ENCODE measurements at regions of chr5 and their contacts with region 1.

Region 1: DNA sequence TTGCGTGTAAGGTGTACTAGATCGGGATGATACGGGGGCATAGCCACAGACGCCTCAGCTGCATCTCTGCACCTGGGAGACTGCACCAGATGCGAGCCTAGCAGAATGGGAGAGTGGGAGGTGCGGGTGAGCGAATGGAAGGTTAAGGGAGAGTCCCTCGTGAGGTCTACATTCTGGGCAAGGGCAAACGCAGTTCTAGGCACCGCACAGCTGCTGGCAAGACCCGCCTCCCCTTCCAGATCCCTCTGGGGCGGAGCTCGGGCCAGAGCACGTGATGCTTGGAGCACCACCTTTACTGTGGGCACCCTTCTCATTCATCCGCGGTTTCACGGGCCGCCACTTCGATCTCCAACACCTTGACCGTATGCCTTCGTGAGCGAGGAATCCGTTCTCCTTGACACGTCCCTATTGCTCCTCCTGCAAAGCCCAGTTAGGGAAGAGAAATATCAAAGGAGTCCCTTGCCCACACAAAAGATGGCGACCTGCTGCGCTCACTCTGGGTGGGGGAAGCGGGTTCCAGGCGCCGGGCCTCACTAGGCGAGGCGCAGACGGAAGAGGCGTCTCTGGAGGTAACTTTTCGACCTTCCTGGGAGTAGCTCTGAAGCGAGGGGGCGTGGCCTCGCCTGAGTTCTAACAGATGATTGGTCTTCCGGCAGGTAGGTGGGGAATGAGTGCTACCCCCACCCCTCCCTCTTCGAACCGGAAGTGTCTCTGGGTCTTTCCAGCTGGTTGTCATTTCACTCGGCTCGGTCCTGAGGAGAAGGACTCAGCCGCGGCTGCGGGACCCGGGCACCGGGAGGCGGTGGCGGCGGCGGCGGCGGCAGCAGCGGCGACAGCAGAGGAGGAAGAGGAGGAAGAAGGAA is at the start of gene CPEB4:
- DNase-seq: peak; percentile 98 to 100
- H3K4me3 ChIP-seq: peak within 1 kb of the TSS; percentile 78 to 86
- H3K27ac ChIP-seq: peak within 1 kb of the TSS; percentile 86 to 90
- H3K4me1 ChIP-seq: no peaks in the 10 kb centered on the region
- H3K27me3 ChIP-seq: no peaks in the 10 kb centered on the region
- CTCF ChIP-seq: no peak
- total RNA-seq, gene CPEB4: 37.4 TPM

Region 2: DNA sequence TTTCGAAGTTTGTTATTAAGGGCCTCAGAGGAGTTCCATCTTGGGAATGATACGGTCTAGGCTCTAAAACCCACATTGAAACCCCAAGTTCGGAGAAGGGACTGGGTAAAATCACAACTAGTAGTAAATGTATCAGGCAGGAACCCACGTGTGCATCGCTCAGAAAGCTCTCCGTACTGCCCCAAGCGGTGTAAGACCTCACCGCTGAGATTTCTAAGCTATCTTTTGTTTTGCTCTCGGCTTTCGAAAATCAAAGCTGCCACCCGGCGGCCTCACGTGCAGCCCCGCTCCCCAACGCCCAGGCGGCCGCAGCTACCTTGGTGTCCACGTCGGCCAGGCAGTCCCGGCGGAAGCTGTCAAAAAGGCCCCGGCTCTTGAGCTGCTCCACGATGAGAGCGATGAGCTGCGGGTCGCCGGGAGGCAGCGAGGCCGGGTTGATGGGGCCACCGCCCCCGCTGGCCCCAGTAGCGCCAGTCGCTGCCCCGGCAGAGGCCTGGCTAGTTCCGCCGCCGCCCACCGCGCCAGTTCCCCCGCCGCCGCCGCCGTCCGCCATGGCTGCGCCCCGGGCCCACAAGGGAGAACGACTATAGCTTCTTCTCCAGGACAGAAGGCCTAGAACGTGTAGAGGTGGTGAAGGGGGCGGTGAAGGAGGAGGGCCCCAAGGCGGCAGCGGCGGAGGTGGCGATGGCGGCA is 271.8 kb before region 1 on chr5:
- intact Hi-C with region 1: loop called (anchors 1 kb)
- DNase-seq: peak in 1 of 2 donors; percentile 77
- H3K4me3 ChIP-seq: peak overlapping the region; percentile 70 to 79
- H3K27ac ChIP-seq: peak overlapping the region; percentile 90 to 92
- H3K4me1 ChIP-seq: peaks cover 9 to 17% of the 10 kb centered on the region in 2 donors
- H3K27me3 ChIP-seq: no peaks in the 10 kb centered on the region
- CTCF ChIP-seq: peak; percentile 47 to 72 (median 67)

Region 3: GRCh38 chr5:173781814-173782670 is 105.8 kb before region 1 on chr5:
- intact Hi-C with region 1: loop called (anchors 5 kb)
- DNase-seq: peak; percentile 78 to 94
- H3K4me3 ChIP-seq: no peak overlapping the region
- H3K27ac ChIP-seq: peak overlapping the region; percentile 65 to 72
- H3K4me1 ChIP-seq: peaks cover 4 to 16% of the 10 kb centered on the region in 2 donors
- H3K27me3 ChIP-seq: no peaks in the 10 kb centered on the region
- CTCF ChIP-seq: no peak

Region 4: DNA sequence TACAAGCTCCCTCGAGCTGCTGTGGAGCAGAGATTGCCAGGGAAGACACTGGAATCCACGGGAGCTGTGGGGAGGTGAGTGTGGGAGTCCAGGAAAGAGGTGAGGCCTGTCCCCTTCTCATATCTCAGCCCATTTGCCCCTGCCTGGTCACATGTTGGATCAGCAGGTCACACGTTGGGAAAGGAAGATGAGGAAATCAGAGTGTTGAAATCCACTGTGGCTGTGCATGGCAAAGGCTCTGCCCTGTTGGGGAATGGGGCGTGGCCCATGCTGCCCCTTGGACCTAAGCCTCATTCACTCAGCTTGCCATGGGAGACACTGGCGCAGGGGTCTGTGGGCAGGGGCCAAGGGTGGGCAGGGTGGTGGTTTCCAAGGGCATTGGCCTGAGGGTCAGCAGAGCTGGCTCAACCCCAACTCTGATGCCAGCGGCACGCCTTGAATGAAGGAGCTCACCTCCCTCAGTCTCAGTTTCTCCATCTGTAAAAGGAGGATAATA is 85.1 kb before region 1 on chr5:
- intact Hi-C with region 1: no loop called
- DNase-seq: no peak
- H3K4me3 ChIP-seq: no peak overlapping the region
- H3K27ac ChIP-seq: no peak overlapping the region
- H3K4me1 ChIP-seq: no peaks in the 10 kb centered on the region
- H3K27me3 ChIP-seq: no peaks in the 10 kb centered on the region
- CTCF ChIP-seq: no peak

Region 5: DNA sequence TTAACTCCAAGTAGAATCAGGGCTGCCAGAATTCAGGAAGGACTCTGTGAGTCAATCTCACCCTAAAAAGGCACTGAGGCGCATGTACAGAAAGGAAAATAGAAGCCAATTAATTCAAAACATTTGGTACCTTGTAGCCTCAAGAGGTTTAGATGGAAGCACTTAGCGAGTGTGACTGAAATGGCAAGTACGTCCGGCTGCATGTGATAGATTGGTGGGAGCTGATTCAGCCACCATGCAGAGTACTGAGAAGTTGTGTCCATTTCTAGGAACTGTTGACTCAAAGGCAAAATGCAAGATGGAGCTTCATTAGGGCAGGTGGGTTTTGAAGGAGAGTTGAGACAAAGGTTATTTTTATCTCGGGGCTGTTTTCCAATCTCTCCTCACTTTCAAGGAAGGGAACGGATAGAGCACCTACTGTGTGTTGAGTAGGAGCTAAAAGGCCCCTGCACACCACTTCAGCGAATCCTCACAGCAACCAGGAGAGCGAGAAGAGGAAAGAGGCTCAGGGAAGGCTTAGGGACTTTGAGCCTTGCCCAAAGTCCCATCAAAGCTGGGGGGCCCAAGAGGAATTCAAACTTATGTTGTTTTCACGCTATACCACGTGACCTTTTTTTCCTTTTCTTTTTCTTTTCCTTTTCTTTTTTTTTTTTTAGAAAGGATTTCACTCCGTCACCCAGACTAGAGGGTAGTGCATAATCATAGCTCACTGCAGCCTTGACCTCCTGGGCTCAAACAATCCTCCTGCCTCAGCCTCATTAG is 34.3 kb before region 1 on chr5:
- intact Hi-C with region 1: loop called (anchors 5 kb)
- DNase-seq: no peak
- H3K4me3 ChIP-seq: no peak overlapping the region
- H3K27ac ChIP-seq: peak overlapping the region; percentile 48 to 73
- H3K4me1 ChIP-seq: peaks cover 3 to 8% of the 10 kb centered on the region in 2 donors
- H3K27me3 ChIP-seq: no peaks in the 10 kb centered on the region
- CTCF ChIP-seq: no peak

Region 6: DNA sequence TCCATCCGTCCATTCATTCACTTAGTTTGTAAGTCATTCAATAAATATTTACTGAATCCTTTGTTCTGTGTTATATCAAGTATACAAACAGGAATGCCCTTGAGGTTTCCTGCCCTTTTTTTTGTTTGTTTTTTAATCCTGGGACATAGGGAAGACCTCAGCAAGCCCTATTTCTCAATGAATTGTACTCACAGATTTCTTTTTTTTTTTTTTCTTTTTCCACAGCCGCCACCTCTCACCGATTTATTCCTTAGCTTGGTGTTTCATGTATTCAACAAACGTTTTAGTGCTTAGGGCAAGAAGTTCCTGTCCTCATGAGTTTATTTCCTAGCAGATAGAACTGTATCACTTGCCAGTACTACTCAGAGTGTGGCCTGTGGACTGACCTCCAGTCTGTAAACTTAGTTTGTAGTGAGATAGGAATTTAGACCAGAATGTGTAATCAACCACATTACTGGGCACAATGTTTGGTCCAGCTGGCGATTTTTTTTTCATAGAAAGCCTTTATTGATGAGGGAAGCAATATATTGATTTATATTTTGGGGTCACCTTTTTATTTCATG is 65.8 kb after region 1 on chr5:
- intact Hi-C with region 1: no loop called
- DNase-seq: no peak
- H3K4me3 ChIP-seq: no peak overlapping the region
- H3K27ac ChIP-seq: no peak overlapping the region
- H3K4me1 ChIP-seq: no peaks in the 10 kb centered on the region
- H3K27me3 ChIP-seq: no peaks in the 10 kb centered on the region
- CTCF ChIP-seq: no peak

Region 7: DNA sequence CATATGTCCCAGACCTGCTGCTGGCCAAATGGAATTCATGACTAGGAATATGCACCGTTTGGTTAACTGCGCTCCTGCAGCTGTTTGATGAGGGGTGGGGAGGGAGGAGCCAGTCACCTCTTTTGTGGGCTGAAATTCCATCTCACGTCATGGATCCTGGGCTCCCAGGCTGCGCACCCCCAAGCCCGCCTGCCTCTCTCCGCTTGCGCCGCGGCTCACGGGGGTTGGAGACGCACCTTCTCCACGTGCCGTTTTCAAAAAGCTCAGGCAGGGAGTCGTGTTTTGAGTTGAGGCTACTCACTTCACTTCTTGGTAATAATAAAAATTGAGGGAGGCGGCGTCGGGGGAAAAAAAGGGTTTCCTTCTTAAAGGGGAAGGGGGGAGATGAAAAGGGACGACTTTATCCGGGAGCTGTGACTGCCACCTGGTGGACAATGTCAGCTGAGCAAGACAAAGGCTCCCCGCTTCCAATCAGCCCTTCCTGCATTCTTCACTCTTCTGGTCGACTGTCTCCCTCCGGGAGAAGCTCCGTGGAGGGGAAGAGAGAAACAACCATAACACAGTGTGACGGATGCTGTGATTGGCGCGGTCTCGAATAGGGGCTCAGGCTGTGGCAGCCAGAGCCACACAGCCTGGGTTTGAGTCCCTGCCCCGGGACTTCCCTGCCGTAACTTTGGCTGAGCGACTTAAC is 85.2 kb after region 1 on chr5:
- intact Hi-C with region 1: loop called (anchors 1 kb)
- DNase-seq: peak in 1 of 2 donors; percentile 92
- H3K4me3 ChIP-seq: peak overlapping the region; percentile 65 to 68
- H3K27ac ChIP-seq: no peak overlapping the region
- H3K4me1 ChIP-seq: peaks cover 4 to 10% of the 10 kb centered on the region in 2 donors
- H3K27me3 ChIP-seq: no peaks in the 10 kb centered on the region
- CTCF ChIP-seq: peak; percentile 86 to 90 (median 90)

Region 8: DNA sequence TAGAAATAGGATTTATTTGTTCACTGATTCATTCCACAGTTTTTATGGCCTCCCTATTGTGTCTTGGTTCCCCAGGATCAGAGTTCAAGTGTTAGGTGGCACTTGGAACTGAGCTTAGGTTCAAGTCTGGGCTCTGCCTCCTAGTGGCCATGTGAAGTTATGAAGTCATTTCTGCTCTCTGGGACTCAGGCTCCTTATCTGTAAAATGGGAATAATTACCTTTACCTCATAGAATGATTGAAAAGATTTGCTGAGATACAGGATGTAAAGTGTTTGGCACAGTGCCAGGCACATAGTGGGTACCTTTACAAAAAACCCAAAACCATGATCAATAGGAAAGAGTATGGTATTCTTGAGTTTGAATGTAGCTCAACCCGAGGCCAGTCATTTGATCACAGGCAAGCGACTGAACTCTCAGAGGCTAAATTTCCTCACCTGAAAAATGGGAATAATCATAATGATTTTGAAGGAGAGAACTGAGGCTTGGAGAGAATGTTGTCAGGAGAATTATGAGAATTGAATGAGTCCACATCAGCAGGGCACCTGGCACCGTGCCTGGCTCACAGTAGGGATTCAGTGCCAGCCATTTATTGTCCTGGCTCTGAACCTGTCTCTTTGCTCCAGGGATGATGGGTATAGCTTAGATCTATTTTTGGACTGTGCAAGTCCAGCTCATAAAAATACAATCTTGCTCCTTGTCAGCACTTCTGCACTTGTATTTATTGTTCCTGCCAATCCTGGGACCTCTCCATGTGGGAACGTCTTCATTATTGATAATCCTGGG is 168.4 kb after region 1 on chr5:
- intact Hi-C with region 1: no loop called
- DNase-seq: no peak
- H3K4me3 ChIP-seq: no peak overlapping the region
- H3K27ac ChIP-seq: no peak overlapping the region
- H3K4me1 ChIP-seq: no peaks in the 10 kb centered on the region
- H3K27me3 ChIP-seq: no peaks in the 10 kb centered on the region
- CTCF ChIP-seq: no peak

Measured in ascending aorta (tissue), 2 donors.